Calu3 (cell line): ENCODE measurements at regions of chr1 and their contacts with region 1.

Region 1: GRCh38 chr1:213122514-213122929 is 71.5 kb downstream of the RPS6KC1 start:
- DNase-seq: peak; percentile 20
- H3K4me3 Mint-ChIP-seq: no peak overlapping the region
- H3K27ac Mint-ChIP-seq: no peak overlapping the region
- H3K4me1 Mint-ChIP-seq: peaks cover 53% of the 10 kb centered on the region
- H3K27me3 Mint-ChIP-seq: no peaks in the 10 kb centered on the region
- CTCF ChIP-seq: peak; percentile 37

Region 2: DNA sequence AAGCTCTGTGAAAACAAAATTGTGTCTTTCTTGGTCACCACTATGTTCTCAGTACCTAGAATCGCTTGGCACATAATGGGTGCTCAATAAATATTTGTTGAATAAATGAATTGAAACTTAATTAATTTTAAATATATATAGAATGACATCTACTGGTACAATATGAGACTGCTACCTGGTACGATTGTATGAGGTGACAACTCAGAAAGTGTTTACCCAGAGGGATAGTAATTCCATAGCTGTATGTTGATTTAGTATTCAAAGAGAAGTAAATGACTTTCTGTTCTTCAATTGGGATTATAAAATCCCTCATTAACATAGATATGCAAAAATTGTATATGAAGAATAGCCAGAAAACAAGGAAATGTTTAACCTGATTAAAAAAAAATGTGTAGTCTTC is 57.3 kb after region 1 on chr1:
- CTCF ChIA-PET with region 1: no interaction called
- intact Hi-C with region 1: loop called (anchors 1 kb)
- DNase-seq: no peak
- H3K4me3 Mint-ChIP-seq: no peak overlapping the region
- H3K27ac Mint-ChIP-seq: no peak overlapping the region
- H3K4me1 Mint-ChIP-seq: peaks cover 11% of the 10 kb centered on the region
- H3K27me3 Mint-ChIP-seq: no peaks in the 10 kb centered on the region
- CTCF ChIP-seq: no peak

Region 3: DNA sequence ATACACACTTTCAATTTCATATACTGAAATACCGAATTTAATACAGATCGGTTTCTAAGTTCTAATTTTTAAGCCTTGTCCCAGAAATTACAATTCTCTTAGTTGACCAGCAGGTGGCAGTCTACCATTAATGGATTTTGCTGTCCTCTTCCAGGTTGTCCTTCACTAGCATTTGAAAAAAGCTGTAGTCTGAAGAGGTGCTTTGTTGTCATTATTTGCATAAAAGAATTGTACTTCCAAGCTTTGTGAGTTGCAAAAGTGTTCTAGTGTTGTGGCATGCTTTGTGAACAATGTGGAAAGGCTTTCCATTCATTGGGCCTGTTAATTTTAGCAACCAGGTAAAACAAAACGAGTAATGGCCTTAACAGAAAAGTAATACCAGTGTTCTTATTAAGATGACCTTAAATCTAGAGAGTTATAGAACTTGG is 122.2 kb after region 1 on chr1:
- CTCF ChIA-PET with region 1: no interaction called
- intact Hi-C with region 1: loop called (anchors 2 kb)
- DNase-seq: peak; percentile 64
- H3K4me3 Mint-ChIP-seq: no peak overlapping the region
- H3K27ac Mint-ChIP-seq: no peak overlapping the region
- H3K4me1 Mint-ChIP-seq: no peaks in the 10 kb centered on the region
- H3K27me3 Mint-ChIP-seq: no peaks in the 10 kb centered on the region
- CTCF ChIP-seq: peak; percentile 77

Region 4: DNA sequence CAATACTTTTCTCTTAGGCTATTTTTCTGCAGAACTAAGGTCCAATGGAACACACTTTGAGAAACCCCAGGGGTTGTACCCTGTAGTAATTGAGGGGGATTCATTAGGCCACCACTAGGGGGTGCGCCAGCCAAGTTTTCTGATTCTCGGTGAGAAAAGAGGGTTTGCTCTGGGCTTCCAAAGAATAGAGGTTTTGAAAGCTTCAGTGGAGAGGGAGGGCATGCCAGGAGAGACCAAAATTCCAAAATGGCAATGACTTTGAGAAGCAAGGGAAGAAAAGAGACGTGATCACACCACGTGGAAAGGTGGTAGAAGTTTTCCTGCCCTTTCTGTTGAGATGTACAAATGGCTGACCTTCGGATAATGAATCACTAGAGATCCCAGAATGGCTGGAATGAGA is 251.8 kb after region 1 on chr1:
- CTCF ChIA-PET with region 1: no interaction called
- intact Hi-C with region 1: loop called (anchors 2 kb)
- DNase-seq: peak; percentile 90
- H3K4me3 Mint-ChIP-seq: no peak overlapping the region
- H3K27ac Mint-ChIP-seq: no peak overlapping the region
- H3K4me1 Mint-ChIP-seq: peaks cover 10% of the 10 kb centered on the region
- H3K27me3 Mint-ChIP-seq: no peaks in the 10 kb centered on the region
- CTCF ChIP-seq: peak; percentile 83

Region 5: DNA sequence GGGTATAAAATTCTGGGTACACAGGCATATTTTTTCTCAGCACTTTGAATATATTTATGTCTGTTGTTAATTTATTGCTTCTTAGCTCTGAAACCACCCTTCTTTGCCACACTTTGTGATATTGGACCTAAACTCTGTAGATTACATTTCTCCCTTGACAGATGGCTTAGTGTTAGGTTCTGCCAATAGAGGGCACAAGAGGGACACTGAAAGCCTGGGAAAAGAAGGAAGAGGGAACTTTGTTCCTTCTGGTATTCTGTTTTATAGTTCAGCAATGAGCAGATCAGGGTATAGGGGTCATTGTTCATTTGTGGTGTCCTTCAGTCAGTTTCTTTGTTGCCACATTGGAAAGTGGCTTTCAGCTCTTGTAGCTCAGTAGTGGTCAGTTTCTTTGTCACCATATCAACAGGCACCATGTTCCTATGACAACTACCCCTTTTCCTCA is 441.7 kb after region 1 on chr1:
- CTCF ChIA-PET with region 1: no interaction called
- intact Hi-C with region 1: loop called (anchors 5 kb)
- DNase-seq: peak; percentile 24
- H3K4me3 Mint-ChIP-seq: no peak overlapping the region
- H3K27ac Mint-ChIP-seq: no peak overlapping the region
- H3K4me1 Mint-ChIP-seq: no peaks in the 10 kb centered on the region
- H3K27me3 Mint-ChIP-seq: no peaks in the 10 kb centered on the region
- CTCF ChIP-seq: peak; percentile 18

Region 6: GRCh38 chr1:213996320-213997037 is 874.0 kb after region 1 on chr1:
- CTCF ChIA-PET with region 1: no interaction called
- intact Hi-C with region 1: loop called (anchors 10 kb)
- DNase-seq: no peak
- H3K4me3 Mint-ChIP-seq: no peak overlapping the region
- H3K27ac Mint-ChIP-seq: no peak overlapping the region
- H3K4me1 Mint-ChIP-seq: no peaks in the 10 kb centered on the region
- H3K27me3 Mint-ChIP-seq: peaks cover 59% of the 10 kb centered on the region
- CTCF ChIP-seq: no peak